Posterior cingulate gyrus (tissue), 11 donors: ENCODE measurements at regions of chr15 and their contacts with region 1.

Region 1: GRCh38 chr15:45187894-45188830 is at the start of gene SHF:
- DNase-seq: peak in 9 of 10 donors; percentile 48 to 93 (median 71)

Region 2: GRCh38 chr15:45604326-45604725 is 416.2 kb after region 1 on chr15:
- intact Hi-C with region 1: loop called (anchors 10 kb)
- DNase-seq: no peak